ENCODE measurements at regions of chr12 and their contacts with region 1.

Region 1: DNA sequence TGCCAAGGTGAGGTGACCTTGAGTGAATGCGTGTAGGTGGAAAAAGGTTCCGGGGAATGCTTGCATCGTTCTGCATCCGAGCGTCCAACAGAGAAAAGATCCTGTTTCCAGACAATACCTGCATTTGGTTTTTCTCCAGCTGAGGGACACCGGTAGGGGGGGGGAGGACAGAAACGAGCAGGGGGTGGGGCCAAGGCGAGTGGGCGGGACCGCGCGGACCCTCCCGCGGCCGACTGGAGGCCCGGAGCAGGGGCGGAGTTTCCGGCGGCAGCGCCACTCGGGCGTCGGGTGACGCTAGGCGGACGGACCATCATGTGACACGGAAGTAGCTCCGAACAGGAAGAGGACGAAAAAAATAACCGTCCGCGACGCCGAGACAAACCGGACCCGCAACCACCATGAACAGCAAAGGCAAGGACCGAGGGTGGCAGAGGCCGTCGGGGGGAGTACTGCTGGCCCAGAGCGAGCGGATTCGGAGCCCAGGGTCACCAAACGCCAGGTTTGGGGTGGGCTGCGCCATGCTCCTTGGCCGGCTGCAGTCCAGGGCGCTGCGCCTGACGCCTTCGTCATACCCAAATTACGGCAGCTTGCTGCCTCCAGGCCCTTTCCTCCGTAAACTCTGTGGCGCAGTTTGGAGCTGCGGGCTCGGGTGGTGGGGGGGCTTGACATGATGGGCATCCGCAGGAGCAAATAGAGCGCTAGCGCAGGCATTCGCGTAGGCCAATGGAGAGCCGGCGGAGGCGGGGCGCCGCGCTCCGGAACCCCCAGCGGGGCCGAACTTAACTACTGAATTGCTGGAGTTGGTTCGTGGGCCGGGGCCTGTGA is at the start of gene DAZAP2:
- DNase-seq: peak; percentile 96 to 99 (median 98)
- ATAC-seq: peak; percentile 98
- H3K4me3 ChIP-seq: peak within 1 kb of the TSS; percentile 93
- H3K27ac ChIP-seq: peak within 1 kb of the TSS; percentile 100
- H3K4me1 ChIP-seq: peaks cover 4 to 22% of the 10 kb centered on the region in 2 experiments; a peak in 4 of 5 replicates
- H3K27me3 ChIP-seq: no peaks in the 10 kb centered on the region
- CTCF ChIP-seq: peak in 2 of 3 experiments; percentile 14 to 18; a peak in 2 of 6 replicates
- EP300 ChIP-seq: peak; percentile 41; the same call in 1 of the 2 replicates
- POLR2A ChIP-seq: peak; percentile 95
- RAD21 ChIP-seq: no peak
- polyA plus RNA-seq, gene DAZAP2: 364 to 668 TPM

Region 2: GRCh38 chr12:49730568-49731101 is 1508.1 kb before region 1 on chr12:
- CTCF ChIA-PET with region 1: no interaction called
- POLR2A ChIA-PET with region 1: no interaction called
- in situ Hi-C with region 1: no loop called
- intact Hi-C with region 1: no loop called
- DNase-seq: peak; percentile 22 to 40 (median 36)
- ATAC-seq: peak; percentile 88
- H3K4me3 ChIP-seq: no peak overlapping the region
- H3K27ac ChIP-seq: no peak overlapping the region; the same call in 2 of the 3 replicates
- H3K4me1 ChIP-seq: peaks cover 0 to 20% of the 10 kb centered on the region in 2 experiments; a peak in 3 of 5 replicates
- H3K27me3 ChIP-seq: no peaks in the 10 kb centered on the region
- CTCF ChIP-seq: no peak
- EP300 ChIP-seq: peak; percentile 53; the same call in 1 of the 2 replicates
- POLR2A ChIP-seq: no peak
- RAD21 ChIP-seq: no peak

Region 3: GRCh38 chr12:50314629-50315312 is 924.0 kb before region 1 on chr12:
- CTCF ChIA-PET with region 1: no interaction called
- POLR2A ChIA-PET with region 1: no interaction called
- in situ Hi-C with region 1: no loop called
- intact Hi-C with region 1: no loop called
- DNase-seq: peak; percentile 45 to 58 (median 52)
- ATAC-seq: 0 out of 3 replicates have a peak, but pooled peaks have one; percentile 47
- H3K4me3 ChIP-seq: no peak overlapping the region
- H3K27ac ChIP-seq: no peak overlapping the region
- H3K4me1 ChIP-seq: peaks cover 7 to 13% of the 10 kb centered on the region in 2 experiments; a peak in 3 of 5 replicates
- H3K27me3 ChIP-seq: no peaks in the 10 kb centered on the region
- CTCF ChIP-seq: peak; percentile 60 to 83 (median 69); a peak in 5 of 6 replicates
- EP300 ChIP-seq: no peak
- POLR2A ChIP-seq: no peak
- RAD21 ChIP-seq: peak; percentile 77 to 97

Region 4: DNA sequence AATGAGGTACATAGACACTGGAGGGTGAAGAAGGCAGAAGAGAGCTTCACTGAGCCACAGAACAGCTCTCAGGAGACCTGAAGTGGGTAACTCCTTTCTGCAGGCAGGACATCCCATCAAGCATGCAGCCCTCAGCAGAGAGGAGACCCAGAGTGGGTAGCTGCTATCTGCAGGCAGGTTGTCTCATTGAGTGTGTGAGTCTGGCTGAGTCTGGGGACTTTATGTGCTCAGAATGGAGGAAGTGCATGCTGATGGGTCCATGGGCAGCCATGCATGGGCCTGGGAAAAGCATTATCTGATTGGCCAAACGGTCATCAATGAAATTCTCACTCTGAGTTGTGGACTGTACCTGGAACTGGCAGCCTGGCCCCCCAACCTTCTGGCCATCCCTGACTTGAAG is 301.1 kb before region 1 on chr12:
- CTCF ChIA-PET with region 1: no interaction called
- POLR2A ChIA-PET with region 1: no interaction called
- in situ Hi-C with region 1: no loop called
- intact Hi-C with region 1: no loop called
- DNase-seq: peak in 1 of 4 experiments; percentile 40
- ATAC-seq: no peak
- H3K4me3 ChIP-seq: no peak overlapping the region
- H3K27ac ChIP-seq: no peak overlapping the region
- H3K4me1 ChIP-seq: peaks cover 5 to 32% of the 10 kb centered on the region in 2 experiments
- H3K27me3 ChIP-seq: no peaks in the 10 kb centered on the region
- CTCF ChIP-seq: no peak
- EP300 ChIP-seq: no peak
- POLR2A ChIP-seq: no peak
- RAD21 ChIP-seq: no peak

Region 5: GRCh38 chr12:51217968-51218606 is 20.6 kb before region 1 on chr12 and contains the start of gene POU6F1:
- CTCF ChIA-PET with region 1: no interaction called
- POLR2A ChIA-PET with region 1: interaction called, 15 read pairs
- in situ Hi-C with region 1: no loop called
- intact Hi-C with region 1: loop called (anchors 2 kb)
- DNase-seq: peak; percentile 90 to 93 (median 93)
- ATAC-seq: peak; percentile 90
- H3K4me3 ChIP-seq: peak within 1 kb of the TSS; percentile 71
- H3K27ac ChIP-seq: peak within 1 kb of the TSS; percentile 90
- H3K4me1 ChIP-seq: peaks cover 21 to 22% of the 10 kb centered on the region in 2 experiments; a peak in 4 of 5 replicates
- H3K27me3 ChIP-seq: no peaks in the 10 kb centered on the region
- CTCF ChIP-seq: peak; percentile 37 to 63 (median 52); a peak in 4 of 6 replicates
- EP300 ChIP-seq: no peak
- POLR2A ChIP-seq: peak; percentile 72
- RAD21 ChIP-seq: 0 out of 4 replicates have a peak, but pooled peaks of 1 of the 2 experiments have one; percentile 17
- polyA plus RNA-seq, gene POU6F1: 0.14 to 0.25 TPM

Region 6: DNA sequence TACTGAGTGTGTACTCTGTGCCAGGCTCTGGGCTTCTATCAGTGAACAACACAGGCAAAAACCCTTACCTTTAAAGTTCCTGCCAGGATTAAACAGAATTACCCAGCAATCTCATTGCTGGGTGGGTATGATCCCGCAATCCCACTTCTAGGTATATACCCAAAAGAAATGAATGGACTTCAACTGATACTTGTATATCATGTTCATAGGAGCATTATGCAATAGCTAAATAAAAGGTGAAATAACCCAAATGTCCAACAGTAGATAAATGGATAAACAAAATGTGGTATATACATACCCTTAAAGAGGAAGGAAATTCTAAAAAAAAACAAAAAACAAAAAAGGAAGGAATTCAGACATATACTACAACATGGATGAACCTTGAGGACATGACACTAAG is 14.6 kb after region 1 on chr12:
- CTCF ChIA-PET with region 1: no interaction called
- POLR2A ChIA-PET with region 1: interaction called, 37 read pairs
- in situ Hi-C with region 1: no loop called
- intact Hi-C with region 1: no loop called
- DNase-seq: no peak
- ATAC-seq: no peak
- H3K4me3 ChIP-seq: no peak overlapping the region
- H3K27ac ChIP-seq: no peak overlapping the region
- H3K4me1 ChIP-seq: peaks cover 0 to 3% of the 10 kb centered on the region in 2 experiments; a peak in 2 of 5 replicates
- H3K27me3 ChIP-seq: no peaks in the 10 kb centered on the region
- CTCF ChIP-seq: no peak
- EP300 ChIP-seq: no peak
- POLR2A ChIP-seq: no peak
- RAD21 ChIP-seq: no peak